ENCODE measurements at regions of chr16 and their contacts with region 1.

Region 1: DNA sequence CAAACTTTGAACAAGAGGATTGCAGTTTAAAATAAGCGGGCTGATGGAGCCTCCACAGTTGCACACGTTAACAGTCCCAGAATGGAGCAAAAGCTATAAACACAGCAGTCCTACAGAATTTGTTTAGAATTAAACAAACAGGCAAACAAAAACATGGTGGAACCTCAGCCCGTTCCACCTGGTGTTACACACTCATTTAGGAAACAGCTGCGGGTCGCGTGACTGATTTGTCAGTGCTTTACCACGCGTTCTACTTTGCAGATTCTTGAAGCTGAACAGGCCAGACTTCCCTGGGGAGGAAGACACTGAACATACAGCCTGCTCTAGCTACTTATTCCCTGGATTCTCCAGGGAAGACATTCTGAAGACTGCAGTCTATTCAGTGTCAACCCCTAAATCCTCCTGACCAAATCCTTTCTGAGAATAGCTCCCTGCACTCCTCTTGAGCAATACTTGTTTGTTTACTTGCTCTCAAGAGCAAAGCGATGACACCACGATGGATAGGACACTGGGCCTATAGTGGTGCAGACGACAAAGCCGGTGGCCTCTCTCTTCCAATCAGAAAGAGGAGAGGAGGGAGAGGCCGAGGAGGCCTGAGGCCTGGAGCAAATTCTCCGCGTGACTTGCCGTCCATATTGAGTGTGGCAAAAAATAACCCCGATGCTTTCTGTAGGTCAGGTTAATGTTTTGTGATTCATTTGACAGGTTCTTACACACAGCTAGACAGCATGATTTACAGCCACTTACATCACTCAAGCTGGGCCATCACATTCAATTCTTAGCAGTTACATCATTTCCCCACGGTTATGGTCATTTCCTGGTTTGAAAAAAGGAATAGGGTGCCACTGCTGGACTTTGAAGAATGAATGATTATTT is 4.0 kb upstream of the MAP1LC3B start:
- DNase-seq: peak; percentile 97
- H3K4me3 ChIP-seq: peak overlapping the region; percentile 51
- H3K27ac ChIP-seq: peak overlapping the region; percentile 85
- H3K4me1 ChIP-seq: peaks cover 44% of the 10 kb centered on the region
- CTCF ChIP-seq: no peak

Region 2: GRCh38 chr16:86931399-86931941 is 456.7 kb before region 1 on chr16:
- CTCF ChIA-PET with region 1: no interaction called
- POLR2A ChIA-PET with region 1: no interaction called
- intact Hi-C with region 1: no loop called
- DNase-seq: no peak
- H3K4me3 ChIP-seq: no peak overlapping the region
- H3K27ac ChIP-seq: no peak overlapping the region
- H3K4me1 ChIP-seq: no peaks in the 10 kb centered on the region
- CTCF ChIP-seq: no peak

Region 3: DNA sequence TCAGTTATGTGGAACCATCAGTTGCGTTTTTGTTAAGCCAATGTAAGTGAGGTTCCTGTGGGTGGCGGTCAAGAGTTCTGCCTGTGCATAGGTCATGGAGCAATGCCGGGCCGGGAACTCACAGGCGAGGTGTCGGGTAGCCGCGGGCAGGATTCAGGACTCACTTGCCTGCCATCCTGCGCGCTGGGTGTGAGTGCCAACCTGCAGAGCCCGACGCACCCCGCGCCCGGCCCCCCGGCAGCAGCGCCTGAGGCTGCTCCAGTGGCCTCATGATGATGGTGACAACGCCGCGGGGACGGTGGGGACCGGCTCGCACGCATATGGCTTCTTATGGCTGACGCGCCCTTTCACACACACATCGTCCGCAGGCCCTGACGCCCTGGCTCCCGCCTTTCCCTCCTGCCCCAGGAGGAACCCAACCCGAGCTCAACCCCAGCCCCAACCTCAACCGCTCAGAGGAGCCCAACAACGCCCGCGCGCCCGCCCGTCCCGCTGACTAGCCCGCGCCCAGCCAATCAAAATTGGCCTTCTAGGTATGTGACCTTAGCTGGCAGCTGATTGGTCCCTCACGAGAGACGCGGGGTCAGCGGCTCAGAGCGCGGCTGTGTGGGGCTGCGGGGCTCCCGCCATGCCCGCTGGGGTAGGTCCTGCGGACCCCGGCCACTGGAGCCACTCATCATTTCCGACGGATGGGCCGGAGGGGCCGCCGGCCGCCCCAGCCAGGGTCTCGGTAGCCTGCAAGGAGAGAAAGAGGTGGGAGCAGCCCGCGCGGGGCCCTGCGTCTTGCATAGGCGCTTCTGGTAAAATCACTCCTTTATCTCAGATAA is 71.0 kb before region 1 on chr16 and contains the start of gene C16orf95:
- CTCF ChIA-PET with region 1: no interaction called
- POLR2A ChIA-PET with region 1: interaction called, 19 read pairs
- intact Hi-C with region 1: loop called (anchors 1 kb)
- DNase-seq: peak; percentile 96
- H3K4me3 ChIP-seq: peak within 1 kb of the TSS; percentile 90
- H3K27ac ChIP-seq: peak within 1 kb of the TSS; percentile 89
- H3K4me1 ChIP-seq: peaks cover 18% of the 10 kb centered on the region
- CTCF ChIP-seq: peak; percentile 78
- total RNA-seq, gene C16orf95: 4.2 and 8.5 TPM in 2 replicates

Region 4: GRCh38 chr16:87324411-87325275 is 63.5 kb before region 1 on chr16:
- CTCF ChIA-PET with region 1: no interaction called
- POLR2A ChIA-PET with region 1: no interaction called
- intact Hi-C with region 1: loop called (anchors 1 kb)
- DNase-seq: peak; percentile 62
- H3K4me3 ChIP-seq: no peak overlapping the region
- H3K27ac ChIP-seq: no peak overlapping the region
- H3K4me1 ChIP-seq: peaks cover 10% of the 10 kb centered on the region
- CTCF ChIP-seq: peak; percentile 81

Region 5: GRCh38 chr16:87372305-87372704 is 15.9 kb before region 1 on chr16:
- CTCF ChIA-PET with region 1: interaction called, 15 read pairs
- POLR2A ChIA-PET with region 1: no interaction called
- intact Hi-C with region 1: no loop called
- DNase-seq: no peak
- H3K4me3 ChIP-seq: no peak overlapping the region
- H3K27ac ChIP-seq: no peak overlapping the region
- H3K4me1 ChIP-seq: peaks cover 23% of the 10 kb centered on the region
- CTCF ChIP-seq: no peak

Measured in OCI-LY7 (cell line).